Thyroid gland (tissue), 4 donors: ENCODE measurements at regions of chr6 and their contacts with region 1.

Region 1: GRCh38 chr6:25278914-25279747 is at the start of gene CARMIL1:
- DNase-seq: peak; percentile 94 to 95
- H3K4me3 ChIP-seq: peak within 1 kb of the TSS; percentile 60 to 88 (median 84)
- H3K27ac ChIP-seq: peak within 1 kb of the TSS; percentile 64 to 86 (median 67)
- H3K4me1 ChIP-seq: peaks cover 5 to 14% of the 10 kb centered on the region in 2 donors
- H3K27me3 ChIP-seq: no peaks in the 10 kb centered on the region
- CTCF ChIP-seq: peak; percentile 19 to 90 (median 73)
- POLR2A ChIP-seq: peak in 1 of 2 donors; percentile 87
- total RNA-seq, gene CARMIL1: 24.7 to 34.4 (median 30.7) TPM

Region 2: DNA sequence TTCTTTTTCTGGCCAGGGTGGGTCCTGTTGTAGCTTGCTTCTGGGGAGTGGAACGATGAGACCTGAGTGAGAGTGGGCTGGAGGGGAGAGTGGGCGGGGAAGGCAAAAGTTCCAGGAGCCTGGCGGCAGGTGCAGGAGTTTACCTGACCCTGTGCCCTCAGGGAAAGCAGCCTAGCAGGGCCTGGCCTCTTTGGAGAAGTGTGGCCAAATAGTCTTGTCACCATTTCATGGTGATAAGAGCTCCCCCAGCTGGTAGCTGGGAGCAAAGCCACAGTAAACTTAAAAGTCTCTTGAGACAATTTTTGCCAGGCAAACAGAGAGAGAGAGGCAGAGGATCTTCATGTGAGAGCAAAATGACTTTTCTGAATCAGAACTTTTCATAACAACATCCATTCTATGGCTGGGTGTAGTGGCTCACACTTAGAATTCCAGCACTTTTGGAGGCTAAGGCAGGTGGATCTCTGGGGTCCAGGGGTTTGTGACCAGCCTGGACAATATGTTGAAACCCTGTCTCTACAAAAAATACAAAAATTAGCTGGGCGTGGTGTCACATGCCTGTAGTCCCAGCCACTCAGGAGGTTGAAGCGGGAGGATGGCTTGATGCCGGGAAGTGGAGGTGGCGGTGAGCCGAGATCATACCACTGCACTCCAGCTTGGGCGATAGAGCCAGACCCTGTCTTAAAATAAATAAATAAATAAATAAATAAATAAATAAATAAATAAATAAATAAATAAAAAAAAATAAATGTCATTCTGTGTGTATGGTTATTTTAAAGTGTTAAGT is 211.1 kb after region 1 on chr6:
- intact Hi-C with region 1: loop called (anchors 5 kb)
- DNase-seq: peak; percentile 77 to 81
- H3K4me3 ChIP-seq: no peak overlapping the region
- H3K27ac ChIP-seq: peak overlapping the region in 2 of 3 donors; percentile 11 to 48
- H3K4me1 ChIP-seq: peaks cover 3 to 9% of the 10 kb centered on the region in 2 donors
- H3K27me3 ChIP-seq: no peaks in the 10 kb centered on the region
- CTCF ChIP-seq: peak; percentile 46 to 90 (median 84)
- POLR2A ChIP-seq: no peak